ENCODE measurements at regions of chr4 and their contacts with region 1.

Region 1: DNA sequence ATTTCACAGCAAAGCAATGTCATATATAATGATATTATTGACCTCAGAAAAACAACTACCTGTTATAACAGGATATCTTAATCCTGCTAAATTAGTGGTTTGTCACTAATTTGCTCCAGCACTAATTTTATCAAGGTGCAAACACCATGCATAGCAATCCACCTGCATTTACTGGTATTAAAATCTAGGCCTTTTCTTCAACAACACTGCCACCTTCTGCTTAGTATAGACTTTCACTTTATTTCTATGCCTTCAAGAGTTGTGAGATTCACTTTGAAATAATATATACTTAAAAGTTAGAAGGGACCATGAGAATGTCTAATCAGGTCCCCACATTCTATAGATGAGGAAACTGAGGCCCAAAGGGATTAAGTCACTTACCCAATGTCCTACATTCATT is 82.1 kb upstream of the IQCM start:
- DNase-seq: no peak
- ATAC-seq: peak in 1 of 8 donors; percentile 60
- H3K4me3 ChIP-seq: no peak overlapping the region
- H3K27ac ChIP-seq: no peak overlapping the region
- H3K4me1 ChIP-seq: no peaks in the 10 kb centered on the region
- H3K27me3 ChIP-seq: no peaks in the 10 kb centered on the region
- CTCF ChIP-seq: peak in 7 of 9 donors; percentile 21 to 61 (median 49)

Region 2: DNA sequence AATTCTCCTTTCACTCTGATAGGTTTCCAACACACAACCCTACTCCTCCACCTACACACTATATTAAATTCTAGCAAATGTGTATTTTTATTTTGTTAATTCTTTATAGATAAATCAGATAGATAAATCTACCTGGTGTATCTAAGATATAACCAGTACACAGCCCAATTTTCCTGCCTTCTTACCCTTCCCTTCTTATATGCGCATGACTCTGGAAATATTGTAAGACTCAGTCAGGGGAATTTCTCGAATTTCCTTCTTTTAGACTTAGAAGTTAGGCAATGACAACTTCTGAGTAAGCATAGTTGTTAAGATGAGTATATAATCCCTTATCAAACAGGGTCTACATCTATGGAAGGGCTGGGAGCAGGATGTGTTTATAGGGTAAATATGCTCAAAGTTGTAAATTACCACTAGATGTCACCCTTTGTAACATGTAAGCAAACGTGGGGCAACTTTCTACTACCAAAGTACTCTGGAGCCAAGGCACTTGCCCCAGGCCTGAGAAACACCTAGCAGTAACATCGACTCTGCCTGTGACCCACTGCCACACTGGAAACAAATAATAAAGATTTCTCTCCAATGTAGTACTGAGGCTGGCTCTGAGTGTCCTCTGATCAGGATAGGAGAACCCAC is 526.9 kb before region 1 on chr4:
- intact Hi-C with region 1: loop called (anchors 2 to 10 kb)
- DNase-seq: no peak
- ATAC-seq: peak in 6 of 8 donors; percentile 55 to 70 (median 62)
- H3K4me3 ChIP-seq: no peak overlapping the region
- H3K27ac ChIP-seq: no peak overlapping the region
- H3K4me1 ChIP-seq: peaks cover 0 to 8% (median 0%) of the 10 kb centered on the region in 9 donors
- H3K27me3 ChIP-seq: no peaks in the 10 kb centered on the region
- CTCF ChIP-seq: peak in 8 of 9 donors; percentile 17 to 62 (median 41)

Region 3: DNA sequence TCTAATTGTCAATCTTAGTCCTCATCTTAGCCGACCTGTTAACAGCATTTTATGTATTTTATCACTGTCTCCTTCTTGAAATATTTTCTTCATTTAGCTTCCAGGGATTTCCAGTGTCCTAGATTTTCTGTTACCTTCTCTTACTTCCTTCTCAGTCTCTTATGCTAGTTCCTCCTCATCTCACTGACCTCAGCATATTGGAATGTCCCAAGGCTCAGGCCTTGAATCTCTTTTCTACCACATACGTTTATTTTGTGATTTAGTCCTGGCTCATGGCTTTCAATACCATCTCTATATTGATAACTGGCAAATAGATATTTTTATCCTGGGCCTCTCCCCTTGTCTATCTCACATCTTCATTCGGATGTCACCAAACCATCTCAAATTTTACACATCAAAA is 143.3 kb before region 1 on chr4:
- intact Hi-C with region 1: no loop called
- DNase-seq: no peak
- ATAC-seq: no peak
- H3K4me3 ChIP-seq: no peak overlapping the region
- H3K27ac ChIP-seq: no peak overlapping the region
- H3K4me1 ChIP-seq: no peaks in the 10 kb centered on the region
- H3K27me3 ChIP-seq: no peaks in the 10 kb centered on the region
- CTCF ChIP-seq: no peak

Region 4: GRCh38 chr4:150491132-150492049 is 593.6 kb after region 1 on chr4:
- intact Hi-C with region 1: no loop called
- DNase-seq: no peak
- ATAC-seq: no peak
- H3K4me3 ChIP-seq: no peak overlapping the region
- H3K27ac ChIP-seq: no peak overlapping the region
- H3K4me1 ChIP-seq: no peaks in the 10 kb centered on the region
- H3K27me3 ChIP-seq: no peaks in the 10 kb centered on the region
- CTCF ChIP-seq: no peak

Measured in heart right ventricle (tissue), 16 donors.